ENCODE measurements at regions of chrX and their contacts with region 1.

Region 1: GRCh38 chrX:38654302-38654701 is 93.0 kb downstream of the TSPAN7 start:
- DNase-seq: no peak
- H3K4me3 Mint-ChIP-seq: no peak overlapping the region
- H3K27ac Mint-ChIP-seq: no peak overlapping the region
- H3K4me1 Mint-ChIP-seq: no peaks in the 10 kb centered on the region
- H3K27me3 Mint-ChIP-seq: no peaks in the 10 kb centered on the region

Region 2: DNA sequence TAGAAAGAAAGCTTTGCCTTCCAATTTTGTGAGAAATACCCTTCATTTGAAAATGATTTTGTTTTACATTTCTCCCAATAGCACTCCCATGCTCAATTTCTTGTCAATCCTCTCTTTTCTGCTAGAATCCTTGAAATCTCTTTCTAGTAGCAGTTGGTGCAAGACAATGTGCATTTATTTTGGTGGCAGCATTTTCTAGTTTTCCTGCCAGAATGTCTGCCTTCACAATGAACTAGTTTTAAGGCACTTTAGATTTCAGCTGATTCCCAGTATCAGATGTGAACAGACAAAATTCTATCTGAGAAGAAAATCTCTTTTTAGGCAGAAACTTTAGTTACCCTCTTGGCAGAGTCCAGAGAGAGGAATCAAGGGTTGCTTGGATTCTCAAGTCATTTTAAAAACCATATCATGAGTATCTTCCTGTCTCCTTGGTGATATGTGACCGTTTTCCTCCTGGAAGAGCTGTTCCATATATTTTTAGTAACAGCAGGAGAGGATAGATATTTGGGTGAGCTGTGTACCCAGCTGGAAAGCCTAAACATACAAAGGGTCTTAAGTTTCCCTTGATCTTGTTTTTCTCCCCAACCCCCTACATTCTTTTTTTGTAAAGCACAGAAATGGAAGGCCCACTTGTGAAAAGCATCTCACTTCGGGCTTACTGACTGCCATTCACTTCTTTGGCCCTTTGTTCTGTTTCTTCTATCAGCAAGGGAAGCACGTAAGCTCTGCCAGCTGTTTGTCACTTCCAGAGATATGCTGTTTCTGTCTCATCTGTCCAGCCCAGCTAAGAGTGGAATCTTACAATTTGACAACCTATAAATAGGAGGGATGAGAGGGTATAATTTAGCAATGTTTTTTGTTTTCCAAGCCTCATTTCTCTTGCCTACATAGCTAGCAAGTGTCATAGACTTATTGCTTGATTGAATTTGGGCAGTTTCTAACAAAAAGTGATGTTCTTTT is 54.2 kb before region 1 on chrX:
- CTCF ChIA-PET with region 1: no interaction called
- intact Hi-C with region 1: no loop called
- DNase-seq: no peak
- H3K4me3 Mint-ChIP-seq: no peak overlapping the region
- H3K27ac Mint-ChIP-seq: no peak overlapping the region
- H3K4me1 Mint-ChIP-seq: no peaks in the 10 kb centered on the region
- H3K27me3 Mint-ChIP-seq: peaks cover 9% of the 10 kb centered on the region

Region 3: DNA sequence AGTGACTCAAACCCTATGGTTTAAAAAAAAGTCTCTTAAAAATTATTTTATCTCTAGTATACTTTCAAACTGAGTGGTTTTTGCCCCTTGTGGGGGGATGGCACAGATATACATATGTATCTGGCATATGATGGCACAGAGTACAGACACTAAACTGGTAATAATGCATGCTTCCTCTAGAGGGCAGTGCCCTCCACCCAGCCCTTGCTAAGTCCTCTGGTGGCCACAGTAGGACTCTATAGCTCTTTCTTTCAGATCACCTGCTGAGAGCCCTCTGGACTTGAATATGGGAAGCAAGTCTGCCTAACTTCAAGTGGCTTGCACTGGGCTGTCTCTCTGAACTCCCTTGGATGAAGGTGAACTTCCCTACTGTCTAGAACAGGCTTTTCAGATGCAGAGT is 26.6 kb before region 1 on chrX:
- CTCF ChIA-PET with region 1: interaction called, 10 read pairs
- intact Hi-C with region 1: no loop called
- DNase-seq: peak; percentile 22
- H3K4me3 Mint-ChIP-seq: no peak overlapping the region
- H3K27ac Mint-ChIP-seq: no peak overlapping the region
- H3K4me1 Mint-ChIP-seq: peaks cover 6% of the 10 kb centered on the region
- H3K27me3 Mint-ChIP-seq: no peaks in the 10 kb centered on the region